Activated CD8-positive, alpha-beta T cell treated with anti-CD3 and anti-CD28 coated beads, Interleukin-2, amount 10 ng/mL, durations not matched to agents 7 days and 5 days (primary cell): ENCODE measurements at regions of chr6 and their contacts with region 1.

Region 1: GRCh38 chr6:25490018-25490801 is 161.8 kb upstream of the SCGN start:
- DNase-seq: peak; percentile 80
- ATAC-seq: peak; percentile 91
- H3K4me3 Mint-ChIP-seq: no peak overlapping the region
- H3K27ac Mint-ChIP-seq: peak overlapping the region; percentile 37
- H3K4me1 Mint-ChIP-seq: peaks cover 7% of the 10 kb centered on the region
- H3K27me3 Mint-ChIP-seq: no peaks in the 10 kb centered on the region

Region 2: DNA sequence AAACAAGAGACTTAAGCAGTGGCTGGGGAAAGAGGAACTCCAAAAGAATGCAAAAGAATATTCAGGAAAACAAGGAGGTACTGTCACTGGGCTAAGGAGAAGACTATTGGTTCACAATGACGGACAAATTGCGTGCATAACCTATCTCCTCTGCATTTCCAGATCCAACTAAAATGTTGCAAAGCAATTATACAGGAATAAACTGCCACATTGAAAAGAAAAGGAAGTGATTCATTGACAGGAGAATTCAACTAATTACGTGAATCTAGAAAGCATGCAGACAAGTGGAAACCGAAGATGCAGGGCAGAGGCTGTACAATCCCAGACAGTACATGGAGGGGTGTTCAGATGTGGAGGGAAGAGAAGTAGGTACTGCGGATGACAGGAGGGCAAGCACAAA is 401.7 kb before region 1 on chr6:
- CTCF ChIA-PET with region 1: no interaction called
- POLR2A ChIA-PET with region 1: no interaction called
- DNase-seq: no peak
- ATAC-seq: no peak
- H3K4me3 Mint-ChIP-seq: no peak overlapping the region
- H3K27ac Mint-ChIP-seq: no peak overlapping the region
- H3K4me1 Mint-ChIP-seq: peaks cover 10% of the 10 kb centered on the region
- H3K27me3 Mint-ChIP-seq: no peaks in the 10 kb centered on the region

Region 3: DNA sequence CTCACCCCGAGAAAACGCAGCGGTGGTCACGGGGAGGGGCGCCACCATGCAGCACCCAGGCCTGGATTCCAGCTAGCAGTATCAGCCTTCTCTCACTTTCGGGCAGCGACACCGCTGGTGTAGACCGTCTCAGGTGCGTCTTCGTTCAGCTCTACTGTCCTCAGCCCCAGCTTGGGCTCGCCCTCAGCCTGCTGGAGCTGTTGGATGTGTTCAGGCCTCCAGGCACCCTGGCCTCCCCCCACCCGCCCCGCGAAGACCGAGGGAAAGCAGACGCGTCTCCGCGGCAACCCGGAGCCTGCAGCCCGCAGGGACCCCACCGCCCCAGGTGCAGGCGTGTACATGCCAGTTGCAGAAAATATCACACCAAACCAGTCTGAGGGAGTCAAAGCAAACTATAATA is 271.9 kb before region 1 on chr6:
- CTCF ChIA-PET with region 1: interaction called, 29 read pairs
- POLR2A ChIA-PET with region 1: no interaction called
- DNase-seq: no peak
- ATAC-seq: no peak
- H3K4me3 Mint-ChIP-seq: no peak overlapping the region
- H3K27ac Mint-ChIP-seq: no peak overlapping the region
- H3K4me1 Mint-ChIP-seq: peaks cover 2% of the 10 kb centered on the region
- H3K27me3 Mint-ChIP-seq: peaks cover 3% of the 10 kb centered on the region

Region 4: GRCh38 chr6:25250878-25251277 is 239.3 kb before region 1 on chr6:
- CTCF ChIA-PET with region 1: interaction called, 10 read pairs
- POLR2A ChIA-PET with region 1: no interaction called
- DNase-seq: no peak
- ATAC-seq: no peak
- H3K4me3 Mint-ChIP-seq: no peak overlapping the region
- H3K27ac Mint-ChIP-seq: no peak overlapping the region
- H3K4me1 Mint-ChIP-seq: peaks cover 6% of the 10 kb centered on the region
- H3K27me3 Mint-ChIP-seq: peaks cover 9% of the 10 kb centered on the region

Region 5: GRCh38 chr6:25278914-25279747 is 211.1 kb before region 1 on chr6 and contains the start of gene CARMIL1:
- CTCF ChIA-PET with region 1: interaction called, 233 read pairs
- POLR2A ChIA-PET with region 1: interaction called, 5 read pairs
- DNase-seq: peak; percentile 82
- ATAC-seq: peak; percentile 91
- H3K4me3 Mint-ChIP-seq: peak within 1 kb of the TSS; percentile 76
- H3K27ac Mint-ChIP-seq: peak within 1 kb of the TSS; percentile 48
- H3K4me1 Mint-ChIP-seq: peaks cover 20% of the 10 kb centered on the region
- H3K27me3 Mint-ChIP-seq: peaks cover 6% of the 10 kb centered on the region
- total RNA-seq, gene CARMIL1: 4.6 to 4.8 TPM

Region 6: GRCh38 chr6:25404693-25405169 is 85.5 kb before region 1 on chr6:
- CTCF ChIA-PET with region 1: interaction called, 22 read pairs
- POLR2A ChIA-PET with region 1: interaction called, 4 read pairs
- DNase-seq: peak; percentile 57
- ATAC-seq: peak; percentile 85
- H3K4me3 Mint-ChIP-seq: no peak overlapping the region
- H3K27ac Mint-ChIP-seq: no peak overlapping the region
- H3K4me1 Mint-ChIP-seq: peaks cover 17% of the 10 kb centered on the region
- H3K27me3 Mint-ChIP-seq: no peaks in the 10 kb centered on the region

Region 7: GRCh38 chr6:25556516-25556915 is 66.3 kb after region 1 on chr6:
- CTCF ChIA-PET with region 1: interaction called, 13 read pairs
- POLR2A ChIA-PET with region 1: no interaction called
- DNase-seq: peak; percentile 85
- ATAC-seq: peak; percentile 71
- H3K4me3 Mint-ChIP-seq: no peak overlapping the region
- H3K27ac Mint-ChIP-seq: no peak overlapping the region
- H3K4me1 Mint-ChIP-seq: peaks cover 1% of the 10 kb centered on the region
- H3K27me3 Mint-ChIP-seq: no peaks in the 10 kb centered on the region